ENCODE measurements at regions of chr18 and their contacts with region 1.

Region 1: DNA sequence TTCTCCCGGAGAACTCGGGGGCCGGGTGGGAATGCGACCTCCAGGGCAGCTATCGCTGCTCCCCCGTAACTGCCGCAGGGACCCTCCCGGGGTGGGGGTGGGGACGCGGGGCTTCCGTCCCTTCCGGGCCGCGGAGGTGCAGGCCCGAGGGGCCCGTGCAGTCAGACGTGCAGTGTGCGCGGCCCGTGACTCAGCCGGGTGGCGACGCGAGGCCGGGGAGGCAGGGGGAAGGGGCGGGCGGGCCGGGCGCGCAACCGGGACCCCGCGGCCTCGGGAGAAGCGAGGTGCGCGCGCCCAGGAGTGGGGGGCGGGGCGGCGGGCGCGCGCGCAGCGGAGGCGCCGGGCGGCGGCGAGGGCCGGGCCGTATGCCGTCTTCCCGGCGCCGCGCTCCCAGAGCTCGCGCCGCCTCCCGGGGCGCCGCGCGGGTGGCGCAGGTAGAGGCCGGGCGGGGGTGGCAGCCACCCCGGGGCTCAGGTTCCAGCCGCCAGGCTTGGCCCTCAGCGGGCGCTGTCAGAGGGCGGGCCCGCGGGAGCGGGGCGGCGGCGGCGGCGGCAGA is 25.0 kb upstream of the SMAD7 start:
- DNase-seq: peak; percentile 18 to 84 (median 48)
- ATAC-seq: peak; percentile 80
- H3K4me3 ChIP-seq: peak overlapping the region; percentile 52
- H3K4me3 Mint-ChIP-seq: no peak overlapping the region
- H3K27ac ChIP-seq: no peak overlapping the region
- H3K27ac Mint-ChIP-seq: no peak overlapping the region
- H3K4me1 ChIP-seq: peaks cover 22% of the 10 kb centered on the region
- H3K4me1 Mint-ChIP-seq: peaks cover 14% of the 10 kb centered on the region
- H3K27me3 ChIP-seq: peaks cover 0 to 7% of the 10 kb centered on the region in 2 experiments
- H3K27me3 Mint-ChIP-seq: peaks cover 36% of the 10 kb centered on the region
- CTCF ChIP-seq: no peak

Region 2: DNA sequence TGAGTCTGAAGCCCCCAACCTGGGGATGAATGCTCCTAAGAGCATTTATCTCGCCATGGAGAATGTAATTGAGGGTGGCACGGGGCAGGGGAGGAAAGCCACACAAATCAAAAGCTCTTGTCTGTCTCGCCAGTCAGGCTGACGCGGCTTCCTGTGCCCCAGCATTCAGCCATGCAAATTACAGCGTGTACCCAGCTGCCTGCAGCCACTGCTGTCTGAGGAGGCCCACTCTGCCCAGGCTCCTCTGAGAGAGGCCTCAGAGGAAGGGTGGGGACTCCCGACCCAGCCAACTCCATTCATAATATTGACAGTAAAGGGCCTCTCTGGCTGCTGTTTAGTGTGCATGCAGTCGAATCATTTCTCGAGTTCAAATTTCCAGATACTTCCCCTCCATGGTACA is 46.9 kb before region 1 on chr18:
- CTCF ChIA-PET with region 1: no interaction called
- POLR2A ChIA-PET with region 1: no interaction called
- intact Hi-C with region 1: loop called in 1 of 2 experiments (anchors 10 kb)
- DNase-seq: peak; percentile 54 to 93 (median 80)
- ATAC-seq: peak; percentile 89
- H3K4me3 ChIP-seq: peak overlapping the region; percentile 31
- H3K4me3 Mint-ChIP-seq: peak overlapping the region; percentile 86
- H3K27ac ChIP-seq: peak overlapping the region in 1 of 2 donors; percentile 24
- H3K27ac Mint-ChIP-seq: peak overlapping the region; percentile 84
- H3K4me1 ChIP-seq: peaks cover 94% of the 10 kb centered on the region
- H3K4me1 Mint-ChIP-seq: peaks cover 97% of the 10 kb centered on the region
- H3K27me3 ChIP-seq: no peaks in the 10 kb centered on the region
- H3K27me3 Mint-ChIP-seq: no peaks in the 10 kb centered on the region
- CTCF ChIP-seq: no peak

Measured in CD4-positive, alpha-beta T cell (primary cell).